ENCODE measurements at regions of chr20 and their contacts with region 1.

Region 1: DNA sequence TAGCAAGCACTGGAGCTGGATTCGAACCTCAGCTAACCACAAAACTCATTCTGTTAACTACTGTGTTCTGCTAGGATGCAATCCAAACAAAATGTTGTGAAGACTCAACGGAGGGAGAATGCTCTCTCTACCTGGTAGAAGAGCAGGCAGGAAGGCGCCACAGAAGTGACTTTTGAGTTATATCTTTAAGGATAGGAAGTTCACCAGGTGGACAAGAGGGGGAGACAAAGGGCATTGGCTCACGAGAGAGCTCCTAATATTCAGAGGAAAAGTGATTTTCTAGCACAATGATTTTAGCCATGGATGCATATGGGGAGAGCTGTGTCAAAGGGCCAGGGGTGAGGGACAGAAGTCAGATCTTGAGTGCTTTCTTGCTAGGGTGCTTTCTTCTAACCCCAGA is 108.4 kb upstream of the MAFB start:
- DNase-seq: no peak
- H3K4me3 ChIP-seq: no peak overlapping the region
- H3K27ac ChIP-seq: no peak overlapping the region
- H3K4me1 ChIP-seq: no peaks in the 10 kb centered on the region
- H3K27me3 ChIP-seq: peaks cover 2 to 5% of the 10 kb centered on the region in 2 experiments
- CTCF ChIP-seq: peak in 1 of 2 donors; percentile 33
- POLR2A ChIP-seq: no peak

Region 2: GRCh38 chr20:40706977-40707582 is 90.3 kb before region 1 on chr20:
- CTCF ChIA-PET with region 1: no interaction called
- POLR2A ChIA-PET with region 1: no interaction called
- dilution Hi-C with region 1: no loop called
- intact Hi-C with region 1: no loop called
- DNase-seq: no peak
- H3K4me3 ChIP-seq: no peak overlapping the region
- H3K27ac ChIP-seq: no peak overlapping the region
- H3K4me1 ChIP-seq: no peaks in the 10 kb centered on the region
- H3K27me3 ChIP-seq: peaks cover 0 to 2% of the 10 kb centered on the region in 2 experiments
- CTCF ChIP-seq: no peak
- POLR2A ChIP-seq: no peak

Region 3: GRCh38 chr20:40849456-40849855 is 52.0 kb after region 1 on chr20:
- CTCF ChIA-PET with region 1: no interaction called
- POLR2A ChIA-PET with region 1: no interaction called
- dilution Hi-C with region 1: no loop called
- intact Hi-C with region 1: no loop called
- DNase-seq: peak; percentile 24
- H3K4me3 ChIP-seq: no peak overlapping the region
- H3K27ac ChIP-seq: no peak overlapping the region
- H3K4me1 ChIP-seq: no peaks in the 10 kb centered on the region
- H3K27me3 ChIP-seq: no peaks in the 10 kb centered on the region
- CTCF ChIP-seq: no peak
- POLR2A ChIP-seq: no peak

Region 4: DNA sequence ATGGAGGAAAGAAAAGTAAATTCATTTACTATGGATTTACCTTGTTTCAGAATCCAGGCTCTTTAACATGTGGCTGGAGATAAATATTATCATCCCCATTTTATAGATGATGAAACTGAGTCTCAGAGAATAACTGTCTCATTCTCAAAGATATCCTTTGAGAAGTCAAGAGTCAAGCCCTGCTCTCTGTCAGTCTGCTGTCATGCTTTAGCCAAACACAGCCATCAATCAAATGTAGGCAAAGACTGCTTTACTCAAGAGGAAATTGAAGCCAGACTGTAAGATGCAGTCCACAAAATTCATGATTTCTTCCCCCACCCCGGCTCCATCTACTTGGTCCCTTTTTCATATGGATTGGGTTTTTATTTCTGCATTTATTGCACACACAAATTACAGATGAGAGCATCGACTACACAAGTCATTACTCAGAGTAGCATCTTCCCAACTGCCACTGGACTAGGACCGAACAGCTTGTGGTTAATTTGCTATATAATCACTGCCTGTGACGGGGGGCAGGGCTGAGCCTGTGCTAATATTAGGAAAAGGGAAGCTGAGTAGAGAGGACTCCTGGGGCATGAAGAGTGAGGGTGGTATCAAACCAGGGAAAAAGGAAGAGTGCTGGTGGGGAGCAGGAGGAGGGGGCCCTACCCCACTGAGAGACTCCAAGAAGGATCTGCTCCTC is 128.5 kb after region 1 on chr20:
- CTCF ChIA-PET with region 1: no interaction called
- POLR2A ChIA-PET with region 1: no interaction called
- dilution Hi-C with region 1: no loop called
- intact Hi-C with region 1: no loop called
- DNase-seq: no peak
- H3K4me3 ChIP-seq: no peak overlapping the region
- H3K27ac ChIP-seq: no peak overlapping the region
- H3K4me1 ChIP-seq: no peaks in the 10 kb centered on the region
- H3K27me3 ChIP-seq: no peaks in the 10 kb centered on the region
- CTCF ChIP-seq: no peak
- POLR2A ChIP-seq: no peak

Region 5: GRCh38 chr20:40945754-40946450 is 148.5 kb after region 1 on chr20:
- CTCF ChIA-PET with region 1: interaction called, 12 read pairs
- POLR2A ChIA-PET with region 1: no interaction called
- dilution Hi-C with region 1: no loop called
- intact Hi-C with region 1: no loop called
- DNase-seq: peak; percentile 56
- H3K4me3 ChIP-seq: no peak overlapping the region
- H3K27ac ChIP-seq: no peak overlapping the region
- H3K4me1 ChIP-seq: no peaks in the 10 kb centered on the region
- H3K27me3 ChIP-seq: no peaks in the 10 kb centered on the region
- CTCF ChIP-seq: peak; percentile 55 to 78
- POLR2A ChIP-seq: no peak

Measured in endothelial cell of umbilical vein (primary cell).